Natural killer cell (primary cell): ENCODE measurements at regions of chr20 and their contacts with region 1.

Region 1: GRCh38 chr20:56439771-56440291 is 27.8 kb downstream of the CASS4 start:
- DNase-seq: peak in 1 of 2 donors; percentile 38
- ATAC-seq: peak in 1 of 3 donors; percentile 29
- H3K4me3 ChIP-seq: no peak overlapping the region
- H3K4me3 Mint-ChIP-seq: peak overlapping the region; percentile 72
- H3K27ac ChIP-seq: peak overlapping the region; percentile 38
- H3K27ac Mint-ChIP-seq: peak overlapping the region; percentile 77 to 81
- H3K4me1 ChIP-seq: peaks cover 48% of the 10 kb centered on the region
- H3K4me1 Mint-ChIP-seq: peaks cover 42% of the 10 kb centered on the region in 2 donors
- H3K27me3 ChIP-seq: no peaks in the 10 kb centered on the region
- H3K27me3 Mint-ChIP-seq: no peaks in the 10 kb centered on the region
- CTCF ChIP-seq: no peak

Region 2: DNA sequence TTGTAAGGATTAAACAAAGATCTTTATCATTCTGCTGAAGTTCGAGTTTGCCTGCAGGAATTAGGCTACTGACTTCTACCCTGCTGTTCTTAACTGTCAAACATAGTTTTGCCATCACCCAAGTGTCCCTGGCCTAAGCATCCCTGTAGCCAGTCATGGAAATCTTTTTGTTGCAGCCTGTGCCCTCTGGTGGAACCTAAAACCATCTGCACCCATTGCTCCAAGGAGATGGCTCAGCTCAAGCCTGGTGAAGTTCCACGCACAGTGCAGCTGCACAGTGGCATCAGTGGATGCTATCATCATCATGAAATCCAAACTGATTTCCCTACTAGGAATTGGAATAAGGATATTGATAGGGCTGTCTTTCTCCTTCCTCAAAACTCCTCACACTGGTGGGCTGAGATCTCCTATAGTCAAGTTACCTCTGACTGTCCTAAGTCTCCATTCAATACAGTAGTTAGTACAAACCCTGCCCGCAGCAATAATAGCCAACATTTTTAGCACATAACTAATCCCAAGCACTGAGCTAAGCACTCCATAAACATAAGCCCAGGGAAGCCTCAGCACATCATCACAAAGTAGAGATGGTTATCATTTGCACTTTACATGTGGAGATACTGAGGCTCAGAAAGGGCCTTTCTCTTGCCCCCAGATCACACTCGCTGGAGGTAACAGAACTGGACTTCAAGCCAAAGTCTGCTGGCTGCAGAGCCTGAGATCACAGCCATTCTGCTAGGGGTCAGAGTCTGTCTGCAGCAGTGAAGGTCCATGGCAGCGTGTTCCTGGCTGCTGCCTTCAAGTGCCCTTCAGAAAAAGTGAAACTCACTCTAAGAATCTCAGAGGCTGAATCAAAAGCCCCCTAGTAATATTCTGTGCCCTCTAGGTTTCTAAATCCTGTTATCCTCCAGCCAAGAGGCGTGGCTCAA is 268.5 kb before region 1 on chr20:
- intact Hi-C with region 1: no loop called
- DNase-seq: no peak
- ATAC-seq: no peak
- H3K4me3 ChIP-seq: no peak overlapping the region
- H3K4me3 Mint-ChIP-seq: no peak overlapping the region
- H3K27ac ChIP-seq: no peak overlapping the region
- H3K27ac Mint-ChIP-seq: no peak overlapping the region
- H3K4me1 ChIP-seq: no peaks in the 10 kb centered on the region
- H3K4me1 Mint-ChIP-seq: no peaks in the 10 kb centered on the region
- H3K27me3 ChIP-seq: no peaks in the 10 kb centered on the region
- H3K27me3 Mint-ChIP-seq: no peaks in the 10 kb centered on the region
- CTCF ChIP-seq: no peak

Region 3: DNA sequence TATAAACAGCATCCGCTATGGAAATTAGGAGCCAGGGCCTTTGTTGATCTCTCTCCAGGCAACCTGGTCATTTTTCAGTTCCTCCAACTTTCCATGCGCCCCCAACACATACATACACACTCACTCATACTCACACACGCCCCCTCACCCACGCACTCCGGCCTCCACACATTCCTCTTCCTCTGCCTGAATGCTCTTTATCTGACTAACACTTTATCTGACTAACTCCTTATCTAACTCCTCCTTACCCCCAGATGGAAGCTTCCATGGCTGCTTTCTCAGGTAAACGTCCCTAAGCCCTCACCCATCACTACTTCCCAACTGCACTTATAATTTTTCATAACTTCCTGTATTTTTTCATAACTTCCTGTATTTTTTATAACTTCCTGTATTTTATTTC is 10.3 kb before region 1 on chr20:
- intact Hi-C with region 1: no loop called
- DNase-seq: no peak
- ATAC-seq: no peak
- H3K4me3 ChIP-seq: no peak overlapping the region
- H3K4me3 Mint-ChIP-seq: peak overlapping the region; percentile 85
- H3K27ac ChIP-seq: peak overlapping the region; percentile 10
- H3K27ac Mint-ChIP-seq: peak overlapping the region; percentile 71 to 85
- H3K4me1 ChIP-seq: peaks cover 39% of the 10 kb centered on the region
- H3K4me1 Mint-ChIP-seq: peaks cover 53 to 61% of the 10 kb centered on the region in 2 donors
- H3K27me3 ChIP-seq: no peaks in the 10 kb centered on the region
- H3K27me3 Mint-ChIP-seq: no peaks in the 10 kb centered on the region
- CTCF ChIP-seq: no peak

Region 4: GRCh38 chr20:56460459-56460858 is 20.6 kb after region 1 on chr20:
- intact Hi-C with region 1: loop called (anchors 2 kb)
- DNase-seq: peak in 1 of 2 donors; percentile 85
- ATAC-seq: peak; percentile 84 to 87 (median 85)
- H3K4me3 ChIP-seq: no peak overlapping the region
- H3K4me3 Mint-ChIP-seq: peak overlapping the region; percentile 50
- H3K27ac ChIP-seq: peak overlapping the region; percentile 77
- H3K27ac Mint-ChIP-seq: peak overlapping the region; percentile 82 to 86
- H3K4me1 ChIP-seq: peaks cover 45% of the 10 kb centered on the region
- H3K4me1 Mint-ChIP-seq: peaks cover 40 to 44% of the 10 kb centered on the region in 2 donors
- H3K27me3 ChIP-seq: no peaks in the 10 kb centered on the region
- H3K27me3 Mint-ChIP-seq: no peaks in the 10 kb centered on the region
- CTCF ChIP-seq: no peak

Region 5: GRCh38 chr20:56527521-56527920 is 87.7 kb after region 1 on chr20:
- intact Hi-C with region 1: no loop called
- DNase-seq: no peak
- ATAC-seq: no peak
- H3K4me3 ChIP-seq: no peak overlapping the region
- H3K4me3 Mint-ChIP-seq: no peak overlapping the region
- H3K27ac ChIP-seq: no peak overlapping the region
- H3K27ac Mint-ChIP-seq: no peak overlapping the region
- H3K4me1 ChIP-seq: no peaks in the 10 kb centered on the region
- H3K4me1 Mint-ChIP-seq: peaks cover 0 to 4% of the 10 kb centered on the region in 2 donors
- H3K27me3 ChIP-seq: no peaks in the 10 kb centered on the region
- H3K27me3 Mint-ChIP-seq: no peaks in the 10 kb centered on the region
- CTCF ChIP-seq: no peak